ENCODE measurements at regions of chr17 and their contacts with region 1.

Region 1: GRCh38 chr17:12020642-12021622 is at the start of gene MAP2K4:
- DNase-seq: peak; percentile 91 to 97 (median 93)
- H3K4me3 ChIP-seq: peak within 1 kb of the TSS; percentile 50 to 56
- H3K4me3 Mint-ChIP-seq: peak within 1 kb of the TSS; percentile 79 to 89 (median 85)
- H3K27ac ChIP-seq: peak within 1 kb of the TSS; percentile 73
- H3K27ac Mint-ChIP-seq: peak within 1 kb of the TSS; percentile 73 to 91 (median 86)
- H3K4me1 ChIP-seq: peaks cover 45% of the 10 kb centered on the region
- H3K4me1 Mint-ChIP-seq: peaks cover 33 to 56% (median 39%) of the 10 kb centered on the region in 4 donors
- H3K27me3 ChIP-seq: no peaks in the 10 kb centered on the region
- H3K27me3 Mint-ChIP-seq: no peaks in the 10 kb centered on the region
- total RNA-seq, gene MAP2K4: 35.3 to 41.3 TPM

Region 2: DNA sequence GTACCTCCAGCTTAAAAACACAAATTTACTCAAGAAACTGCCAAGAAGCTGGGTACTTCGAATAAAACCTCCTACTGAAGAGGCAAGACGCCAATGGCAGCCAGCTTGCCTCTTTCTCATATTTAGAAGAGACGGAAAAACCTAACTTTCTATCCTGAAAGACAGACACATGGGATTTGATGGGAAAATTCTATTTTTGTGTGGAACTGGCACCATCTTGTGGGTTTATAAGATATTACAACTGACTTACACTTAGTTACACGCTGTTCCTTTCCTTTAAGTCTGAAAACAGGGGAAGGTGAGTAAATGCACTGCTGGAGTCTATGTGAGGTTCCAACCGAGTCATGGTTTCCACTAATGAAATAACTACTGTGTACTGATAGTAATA is 34.0 kb before region 1 on chr17:
- CTCF ChIA-PET with region 1: no interaction called
- POLR2A ChIA-PET with region 1: interaction called, 4 read pairs
- intact Hi-C with region 1: loop called (anchors 5 kb)
- DNase-seq: no peak
- H3K4me3 ChIP-seq: no peak overlapping the region
- H3K4me3 Mint-ChIP-seq: no peak overlapping the region
- H3K27ac ChIP-seq: no peak overlapping the region
- H3K27ac Mint-ChIP-seq: no peak overlapping the region
- H3K4me1 ChIP-seq: no peaks in the 10 kb centered on the region
- H3K4me1 Mint-ChIP-seq: peaks cover 13 to 25% (median 19%) of the 10 kb centered on the region in 4 donors
- H3K27me3 ChIP-seq: no peaks in the 10 kb centered on the region
- H3K27me3 Mint-ChIP-seq: no peaks in the 10 kb centered on the region